ENCODE measurements at regions of chrX and their contacts with region 1.

Region 1: GRCh38 chrX:53683556-53684414 is 2.7 kb downstream of the HUWE1 start:
- DNase-seq: peak; percentile 81
- CTCF ChIP-seq: no peak

Region 2: GRCh38 chrX:53831662-53832635 is 148.2 kb after region 1 on chrX:
- in situ Hi-C with region 1: loop called (anchors 25 kb)
- DNase-seq: peak; percentile 55
- CTCF ChIP-seq: peak; percentile 48

Region 3: GRCh38 chrX:53930515-53931380 is 247.0 kb after region 1 on chrX:
- in situ Hi-C with region 1: no loop called
- DNase-seq: no peak
- CTCF ChIP-seq: no peak

Region 4: DNA sequence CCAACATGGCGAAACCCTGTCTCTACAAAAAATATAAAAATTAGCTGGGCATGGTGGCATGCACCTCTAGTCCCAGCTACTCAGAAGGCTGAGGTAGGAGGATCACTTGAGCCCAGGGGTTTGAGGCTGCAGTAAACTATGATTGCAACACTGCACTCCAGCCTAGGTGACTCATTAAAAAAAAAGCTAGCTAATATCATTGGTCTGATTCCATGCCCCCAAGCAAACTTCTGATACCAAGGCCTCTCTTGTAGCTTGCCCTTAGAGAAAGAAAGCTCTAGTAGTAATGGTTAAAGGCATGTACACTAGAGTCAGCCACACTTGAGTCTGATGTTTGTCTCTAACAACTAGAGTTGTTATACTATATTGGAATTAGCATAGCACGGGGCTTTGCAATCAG is 393.1 kb after region 1 on chrX:
- in situ Hi-C with region 1: no loop called
- DNase-seq: no peak
- CTCF ChIP-seq: no peak